HepG2 (cell line): ENCODE measurements at regions of chr1 and their contacts with region 1.

Region 1: GRCh38 chr1:42958488-42959319 is at the start of gene SLC2A1:
- DNase-seq: peak; percentile 92
- ATAC-seq: peak; percentile 87
- H3K4me3 ChIP-seq: peak within 1 kb of the TSS; percentile 93 to 97 (median 97)
- H3K27ac ChIP-seq: peak within 1 kb of the TSS; percentile 80
- H3K4me1 ChIP-seq: peaks cover 68% of the 10 kb centered on the region
- H3K27me3 ChIP-seq: no peaks in the 10 kb centered on the region; a peak in 1 of 5 replicates
- CTCF ChIP-seq: no peak
- EP300 ChIP-seq: no peak
- POLR2A ChIP-seq: peak; percentile 95 to 99
- RAD21 ChIP-seq: peak; percentile 37; the same call in 1 of the 2 replicates
- total RNA-seq, gene SLC2A1: 54.3 and 125 TPM in 2 replicates

Region 2: DNA sequence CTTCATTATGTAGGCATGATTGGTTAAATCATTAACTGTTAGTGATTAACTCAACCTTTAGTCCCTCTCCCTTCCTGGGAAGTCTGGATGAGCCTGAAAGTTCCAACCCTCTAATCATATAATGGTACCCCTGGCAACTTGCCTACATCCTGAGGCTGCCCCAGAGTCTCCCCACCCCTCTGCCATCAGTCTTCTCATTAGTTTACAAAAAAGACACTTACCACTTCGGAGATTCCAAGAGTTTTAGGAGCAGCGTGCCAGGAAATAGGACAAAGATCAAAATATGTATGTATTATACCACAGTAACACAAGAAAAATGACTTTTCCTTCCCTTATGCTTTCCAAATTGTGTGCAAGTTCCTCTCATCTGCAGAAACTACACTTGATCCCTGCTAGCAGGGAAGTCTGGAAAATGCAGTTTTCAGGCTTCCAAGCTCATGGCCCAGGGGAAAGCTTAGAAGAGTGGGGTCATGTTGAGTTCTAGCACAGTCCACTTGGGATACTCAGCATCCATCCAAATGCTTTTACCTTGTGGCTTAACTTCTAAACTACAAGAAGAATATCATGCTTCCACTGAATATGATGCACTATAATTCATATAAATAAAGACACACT is 365.1 kb before region 1 on chr1:
- CTCF ChIA-PET with region 1: no interaction called
- POLR2A ChIA-PET with region 1: no interaction called
- in situ Hi-C with region 1: no loop called
- intact Hi-C with region 1: no loop called
- DNase-seq: no peak
- ATAC-seq: no peak
- H3K4me3 ChIP-seq: no peak overlapping the region
- H3K27ac ChIP-seq: no peak overlapping the region
- H3K4me1 ChIP-seq: no peaks in the 10 kb centered on the region; the same call in 1 of the 2 replicates
- H3K27me3 ChIP-seq: peaks cover 0 to 8% of the 10 kb centered on the region in 2 experiments; a peak in 1 of 5 replicates
- CTCF ChIP-seq: no peak
- EP300 ChIP-seq: no peak
- POLR2A ChIP-seq: no peak
- RAD21 ChIP-seq: no peak

Region 3: DNA sequence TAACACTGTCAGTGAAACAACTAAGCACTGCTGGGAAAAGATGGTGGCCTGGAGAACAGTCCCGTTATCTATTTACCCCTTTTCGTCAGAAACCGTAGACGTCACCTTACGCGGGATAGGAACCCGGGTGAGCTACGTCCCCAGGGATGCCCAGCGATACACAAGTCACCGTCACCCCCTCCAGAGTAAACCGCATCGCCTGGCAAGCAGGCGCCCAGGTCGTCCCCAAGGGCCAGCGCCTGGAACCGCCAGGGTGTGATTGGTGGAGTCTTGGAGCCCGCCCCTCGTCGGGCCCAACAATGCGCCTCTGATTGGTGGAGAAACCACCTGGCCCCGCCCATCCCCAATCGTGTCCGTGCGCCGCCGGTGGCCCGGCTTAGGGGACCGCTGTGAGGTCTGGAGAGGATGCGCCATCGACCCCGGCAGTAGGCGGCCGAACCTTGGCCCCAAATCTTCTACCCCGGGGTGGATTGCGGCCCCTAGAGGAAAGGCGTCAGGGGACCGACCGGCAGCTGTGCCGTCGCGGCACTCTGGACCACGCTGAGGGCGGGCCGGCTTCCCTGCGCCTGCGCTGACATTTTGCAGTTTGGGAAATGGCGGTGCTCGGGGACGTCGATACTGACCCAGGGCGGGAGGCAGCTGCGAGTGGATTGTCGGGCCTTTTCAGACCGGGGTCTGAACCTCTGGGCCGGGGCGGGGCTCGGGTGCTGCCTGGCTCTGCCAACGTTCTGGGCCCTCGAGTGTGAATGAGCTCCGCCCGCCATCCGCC is 34.4 kb before region 1 on chr1:
- CTCF ChIA-PET with region 1: no interaction called
- POLR2A ChIA-PET with region 1: interaction called, 4 read pairs
- in situ Hi-C with region 1: no loop called
- intact Hi-C with region 1: loop called (anchors 5 kb)
- DNase-seq: peak; percentile 86
- ATAC-seq: peak; percentile 93
- H3K4me3 ChIP-seq: peak overlapping the region; percentile 46 to 74 (median 55)
- H3K27ac ChIP-seq: no peak overlapping the region
- H3K4me1 ChIP-seq: peaks cover 53% of the 10 kb centered on the region
- H3K27me3 ChIP-seq: no peaks in the 10 kb centered on the region
- CTCF ChIP-seq: peak; percentile 58
- EP300 ChIP-seq: no peak
- POLR2A ChIP-seq: peak; percentile 21 to 81; a peak in 2 of 4 replicates
- RAD21 ChIP-seq: peak; percentile 42; the same call in 1 of the 2 replicates

Region 4: DNA sequence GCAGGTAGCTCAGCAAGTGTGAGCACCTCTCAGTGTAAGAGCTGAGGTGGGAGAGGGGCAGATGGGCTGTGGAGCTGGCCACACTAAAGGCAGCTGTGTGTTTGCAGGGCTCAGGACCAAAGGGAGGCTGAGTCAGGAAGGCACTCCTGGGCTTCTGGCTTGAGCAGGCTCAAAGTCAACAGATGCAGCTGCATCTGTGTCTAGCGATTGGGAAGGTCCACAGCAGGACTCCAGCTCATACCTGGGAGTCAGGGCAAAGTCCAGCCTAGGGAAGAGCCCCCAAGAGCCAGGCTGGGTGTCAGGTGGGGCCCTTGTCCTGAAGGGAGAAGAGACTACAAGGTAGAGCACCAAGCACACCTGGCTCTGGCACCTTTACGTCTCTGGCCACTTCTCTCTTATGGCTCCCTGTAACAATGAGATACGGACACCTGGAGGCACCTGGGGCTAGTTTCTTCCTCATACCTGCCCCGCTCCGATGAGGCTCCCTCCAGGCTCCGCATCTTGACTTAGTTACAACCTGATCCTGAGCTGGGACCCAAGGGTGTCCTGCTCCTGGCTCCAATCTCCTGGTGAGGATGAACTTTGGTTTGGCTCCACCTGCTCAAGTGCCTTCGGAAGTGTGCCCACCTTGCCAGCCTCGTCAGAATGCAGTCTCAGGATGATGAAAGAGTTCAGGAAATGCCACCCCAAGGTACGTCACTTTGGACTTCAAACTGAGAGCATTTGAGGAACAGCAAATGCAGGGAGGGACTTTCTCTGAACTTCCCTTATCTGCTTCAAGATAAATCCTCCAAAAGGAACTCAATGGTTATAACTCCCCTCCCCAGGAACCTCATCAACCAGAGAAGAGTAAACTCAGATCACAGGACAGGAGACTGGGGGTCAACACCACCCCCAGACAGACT is 21.4 kb after region 1 on chr1:
- CTCF ChIA-PET with region 1: no interaction called
- POLR2A ChIA-PET with region 1: interaction called, 18 read pairs
- in situ Hi-C with region 1: no loop called
- intact Hi-C with region 1: no loop called
- DNase-seq: peak; percentile 87
- ATAC-seq: peak; percentile 76
- H3K4me3 ChIP-seq: peak overlapping the region in 2 of 3 experiments; percentile 16 to 47; a peak in 3 of 6 replicates
- H3K27ac ChIP-seq: peak overlapping the region; percentile 29
- H3K4me1 ChIP-seq: peaks cover 34% of the 10 kb centered on the region
- H3K27me3 ChIP-seq: no peaks in the 10 kb centered on the region
- CTCF ChIP-seq: no peak
- EP300 ChIP-seq: peak in 1 of 2 experiments; percentile 80; a peak in 2 of 4 replicates
- POLR2A ChIP-seq: no peak
- RAD21 ChIP-seq: no peak

Region 5: GRCh38 chr1:43008115-43009060 is 49.7 kb after region 1 on chr1:
- CTCF ChIA-PET with region 1: no interaction called
- POLR2A ChIA-PET with region 1: interaction called, 4 read pairs
- in situ Hi-C with region 1: no loop called
- intact Hi-C with region 1: loop called (anchors 10 kb)
- DNase-seq: peak; percentile 93
- ATAC-seq: peak; percentile 75
- H3K4me3 ChIP-seq: peak overlapping the region; percentile 19 to 57 (median 28)
- H3K27ac ChIP-seq: peak overlapping the region; percentile 55
- H3K4me1 ChIP-seq: peaks cover 58% of the 10 kb centered on the region
- H3K27me3 ChIP-seq: no peaks in the 10 kb centered on the region
- CTCF ChIP-seq: no peak
- EP300 ChIP-seq: peak in 1 of 2 experiments; percentile 64; a peak in 2 of 4 replicates
- POLR2A ChIP-seq: no peak
- RAD21 ChIP-seq: no peak

Region 6: GRCh38 chr1:43035821-43036741 is 77.4 kb after region 1 on chr1:
- CTCF ChIA-PET with region 1: no interaction called
- POLR2A ChIA-PET with region 1: interaction called, 4 read pairs
- in situ Hi-C with region 1: no loop called
- intact Hi-C with region 1: loop called (anchors 2 kb)
- DNase-seq: peak; percentile 93
- ATAC-seq: peak; percentile 75
- H3K4me3 ChIP-seq: peak overlapping the region in 2 of 3 experiments; percentile 44 to 68; a peak in 5 of 6 replicates
- H3K27ac ChIP-seq: peak overlapping the region; percentile 91
- H3K4me1 ChIP-seq: peaks cover 93% of the 10 kb centered on the region
- H3K27me3 ChIP-seq: no peaks in the 10 kb centered on the region
- CTCF ChIP-seq: peak; percentile 31; the same call in 1 of the 2 replicates
- EP300 ChIP-seq: peak in 1 of 2 experiments; percentile 96; a peak in 3 of 4 replicates
- POLR2A ChIP-seq: peak in 1 of 2 experiments; percentile 49; a peak in 2 of 4 replicates
- RAD21 ChIP-seq: no peak

Region 7: DNA sequence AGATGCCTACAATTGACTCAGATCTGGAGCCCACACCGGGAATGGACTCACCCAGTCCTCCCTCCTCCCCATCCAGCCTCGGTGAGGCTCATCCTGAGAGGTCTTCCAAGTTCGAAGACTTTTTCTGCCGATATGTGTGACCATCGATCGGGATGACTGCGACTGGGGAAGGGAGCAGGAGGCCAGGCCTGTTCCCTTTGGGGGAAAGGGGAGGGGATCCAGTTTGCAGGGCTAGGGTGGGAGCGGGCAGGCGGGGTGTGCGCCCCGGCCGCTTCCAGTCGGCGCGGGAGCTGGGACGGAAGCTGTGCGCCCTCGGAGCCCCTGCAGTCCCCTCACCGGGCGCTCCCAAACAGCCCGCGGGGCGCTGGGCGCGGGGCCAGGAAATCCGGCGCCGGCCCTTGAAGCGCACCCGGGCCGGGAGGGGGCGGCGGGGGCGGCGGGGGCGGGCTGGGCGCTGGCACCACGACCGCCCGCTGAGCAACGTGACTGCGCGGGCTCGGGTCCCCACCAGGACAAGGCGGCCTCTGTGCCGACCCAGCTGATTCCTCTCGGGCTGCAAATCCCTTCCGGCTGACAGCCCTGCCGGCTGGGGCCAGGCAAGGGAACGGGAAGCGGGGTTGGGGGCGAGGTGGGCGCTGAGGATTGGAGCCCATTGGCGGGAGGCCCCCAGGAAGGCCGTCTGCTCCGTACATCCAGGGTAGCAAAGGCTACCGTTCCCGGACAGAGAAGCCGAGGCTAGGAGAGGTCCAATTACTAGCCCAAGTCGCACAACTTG is 109.5 kb after region 1 on chr1:
- CTCF ChIA-PET with region 1: interaction called, 3 read pairs
- POLR2A ChIA-PET with region 1: no interaction called
- in situ Hi-C with region 1: loop called (anchors 5 kb)
- intact Hi-C with region 1: loop called (anchors 2 kb)
- DNase-seq: no peak
- ATAC-seq: no peak
- H3K4me3 ChIP-seq: no peak overlapping the region
- H3K27ac ChIP-seq: no peak overlapping the region
- H3K4me1 ChIP-seq: peaks cover 79% of the 10 kb centered on the region
- H3K27me3 ChIP-seq: no peaks in the 10 kb centered on the region
- CTCF ChIP-seq: no peak
- EP300 ChIP-seq: no peak
- POLR2A ChIP-seq: no peak
- RAD21 ChIP-seq: no peak